BJ (cell line): ENCODE measurements at regions of chr5 and their contacts with region 1.

Region 1: DNA sequence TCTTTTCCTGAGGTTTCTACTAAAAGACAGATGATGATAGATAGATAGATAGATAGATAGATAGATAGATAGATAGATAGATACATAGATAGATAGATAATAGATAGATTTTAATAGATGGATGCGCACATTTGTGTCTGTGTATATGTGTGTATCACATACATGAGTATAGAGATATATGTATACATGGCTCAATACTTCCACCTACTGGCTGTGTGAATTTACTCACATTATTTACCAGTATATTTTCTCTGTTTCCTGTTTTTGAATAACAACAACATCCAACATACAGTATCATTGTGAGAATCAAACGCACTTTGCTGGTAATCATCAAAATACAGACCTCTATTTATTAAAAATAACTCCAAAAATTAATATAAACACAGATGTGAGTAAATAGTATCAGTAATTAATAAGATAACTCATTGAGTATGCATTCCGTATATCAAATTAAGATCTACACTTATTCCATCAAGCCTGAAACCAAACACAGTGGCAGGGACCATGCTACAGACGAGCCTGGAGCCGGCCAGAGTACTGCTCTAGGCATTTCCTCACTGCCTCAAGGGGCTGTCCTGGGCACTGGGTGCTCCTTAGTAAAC is 338.0 kb downstream of the SEMA5A start:
- DNase-seq: no peak
- H3K4me3 ChIP-seq: no peak overlapping the region
- H3K27me3 ChIP-seq: no peaks in the 10 kb centered on the region
- CTCF ChIP-seq: peak; percentile 33; the same call in 1 of the 2 replicates

Region 2: GRCh38 chr5:9197881-9198260 is 10.0 kb before region 1 on chr5:
- CTCF ChIA-PET with region 1: interaction called, 14 read pairs
- POLR2A ChIA-PET with region 1: no interaction called
- DNase-seq: no peak
- H3K4me3 ChIP-seq: no peak overlapping the region
- H3K27me3 ChIP-seq: no peaks in the 10 kb centered on the region
- CTCF ChIP-seq: no peak

Region 3: GRCh38 chr5:9313734-9314133 is 105.8 kb after region 1 on chr5:
- CTCF ChIA-PET with region 1: no interaction called
- POLR2A ChIA-PET with region 1: no interaction called
- DNase-seq: no peak
- H3K4me3 ChIP-seq: no peak overlapping the region
- H3K27me3 ChIP-seq: no peaks in the 10 kb centered on the region
- CTCF ChIP-seq: no peak